ENCODE measurements at regions of chr2 and their contacts with region 1.

Region 1: DNA sequence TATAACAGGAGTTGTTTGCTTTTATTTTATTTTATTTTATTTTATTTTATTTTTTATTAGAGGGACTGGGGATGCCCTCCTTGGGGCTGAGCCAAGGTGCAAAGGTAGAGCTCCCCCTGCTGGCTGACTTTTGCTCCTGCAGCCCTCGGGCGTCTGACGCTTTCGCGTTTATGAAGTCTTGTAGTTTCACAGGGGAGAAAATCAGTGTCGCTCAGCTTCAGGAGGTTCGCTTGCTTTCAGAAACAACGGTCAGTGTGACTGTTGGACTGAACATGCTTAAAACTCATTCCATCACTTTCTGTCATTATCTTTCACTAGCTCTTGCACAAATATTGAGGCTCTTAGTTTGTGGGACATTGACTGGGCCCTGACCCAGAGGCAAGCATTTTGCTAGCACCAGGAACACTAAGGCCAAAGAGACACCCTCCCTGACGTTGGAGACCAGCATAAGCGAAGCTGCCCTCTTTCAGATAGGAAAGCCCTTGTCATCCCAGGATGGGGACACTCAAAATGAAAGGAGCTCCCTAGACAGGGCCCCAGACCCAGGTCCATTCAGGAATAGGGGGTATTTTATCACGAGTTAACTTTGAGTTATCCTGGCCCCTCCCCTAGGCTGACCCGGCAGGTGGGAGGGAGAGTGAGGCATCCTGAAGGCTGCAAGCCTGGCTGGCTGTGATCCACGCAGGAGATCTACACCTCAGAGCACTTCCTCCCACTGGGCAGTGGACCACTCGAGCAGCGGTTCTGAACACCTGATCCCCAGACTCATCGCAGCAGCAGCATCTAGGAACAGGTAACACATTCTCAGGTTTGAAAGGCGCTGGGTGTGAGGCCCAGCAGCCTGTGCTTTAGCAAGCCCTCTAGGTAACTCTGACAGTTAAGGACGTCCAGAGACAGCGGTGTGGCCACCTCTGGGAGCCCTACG is 34.4 kb downstream of the LGALSL start:
- DNase-seq: peak; percentile 86
- ATAC-seq: peak; percentile 78
- H3K4me3 Mint-ChIP-seq: no peak overlapping the region
- H3K27ac Mint-ChIP-seq: no peak overlapping the region
- H3K4me1 Mint-ChIP-seq: peaks cover 23% of the 10 kb centered on the region
- H3K27me3 Mint-ChIP-seq: peaks cover 26% of the 10 kb centered on the region

Region 2: GRCh38 chr2:64338910-64339500 is 149.3 kb before region 1 on chr2:
- CTCF ChIA-PET with region 1: interaction called, 13 read pairs
- POLR2A ChIA-PET with region 1: no interaction called
- DNase-seq: peak; percentile 48
- ATAC-seq: peak; percentile 70
- H3K4me3 Mint-ChIP-seq: no peak overlapping the region
- H3K27ac Mint-ChIP-seq: no peak overlapping the region
- H3K4me1 Mint-ChIP-seq: peaks cover 8% of the 10 kb centered on the region
- H3K27me3 Mint-ChIP-seq: peaks cover 6% of the 10 kb centered on the region

Region 3: GRCh38 chr2:64474121-64474571 is 14.2 kb before region 1 on chr2:
- CTCF ChIA-PET with region 1: interaction called, 20 read pairs
- POLR2A ChIA-PET with region 1: interaction called, 3 read pairs
- DNase-seq: no peak
- ATAC-seq: no peak
- H3K4me3 Mint-ChIP-seq: no peak overlapping the region
- H3K27ac Mint-ChIP-seq: no peak overlapping the region
- H3K4me1 Mint-ChIP-seq: peaks cover 25% of the 10 kb centered on the region
- H3K27me3 Mint-ChIP-seq: peaks cover 7% of the 10 kb centered on the region

Region 4: DNA sequence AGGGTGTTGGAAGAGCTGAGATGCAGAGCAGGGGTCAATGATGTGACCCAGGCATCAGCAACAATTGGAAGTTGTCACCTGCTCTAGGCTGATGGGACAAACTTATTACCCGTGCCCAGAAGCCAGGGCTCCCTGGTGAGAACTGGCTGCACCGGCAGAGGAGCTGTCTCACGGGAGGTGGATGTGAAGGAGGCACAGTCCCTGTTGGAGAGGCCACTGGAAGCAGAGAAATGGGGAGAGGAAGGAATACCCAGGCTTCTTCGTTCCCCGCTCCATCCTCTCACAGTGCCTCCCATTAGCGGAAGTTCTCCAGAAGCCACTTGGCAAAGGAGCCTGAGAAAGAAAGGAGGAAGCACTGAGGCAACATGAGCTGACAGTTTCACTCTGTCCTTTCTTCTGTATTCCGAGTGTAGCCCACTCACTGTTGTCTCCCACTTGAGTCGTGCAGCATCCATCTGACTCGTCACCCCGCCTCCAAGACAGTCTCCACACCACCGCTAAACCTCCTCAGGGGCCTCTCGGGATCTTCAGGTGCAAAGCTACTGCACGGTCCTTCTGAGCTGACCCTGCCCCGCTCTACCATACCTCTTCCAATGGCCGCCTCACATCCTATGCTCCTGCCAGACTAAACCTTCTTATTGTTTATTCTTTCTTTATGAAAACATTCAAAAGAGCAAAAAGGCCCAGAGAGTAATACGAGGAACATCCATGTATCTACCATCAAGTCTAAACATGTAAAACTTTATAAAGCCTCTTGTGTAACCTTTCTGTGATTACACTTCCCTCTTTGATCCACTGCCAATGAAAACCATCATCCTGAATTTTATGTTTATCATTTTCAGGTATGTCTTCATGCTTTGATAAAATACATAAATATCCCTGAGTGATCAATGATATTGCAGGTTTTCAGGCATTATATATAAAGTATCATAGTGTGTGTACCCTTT is 16.7 kb after region 1 on chr2:
- CTCF ChIA-PET with region 1: interaction called, 12 read pairs
- POLR2A ChIA-PET with region 1: no interaction called
- DNase-seq: no peak
- ATAC-seq: no peak
- H3K4me3 Mint-ChIP-seq: no peak overlapping the region
- H3K27ac Mint-ChIP-seq: no peak overlapping the region
- H3K4me1 Mint-ChIP-seq: peaks cover 4% of the 10 kb centered on the region
- H3K27me3 Mint-ChIP-seq: peaks cover 11% of the 10 kb centered on the region

Region 5: DNA sequence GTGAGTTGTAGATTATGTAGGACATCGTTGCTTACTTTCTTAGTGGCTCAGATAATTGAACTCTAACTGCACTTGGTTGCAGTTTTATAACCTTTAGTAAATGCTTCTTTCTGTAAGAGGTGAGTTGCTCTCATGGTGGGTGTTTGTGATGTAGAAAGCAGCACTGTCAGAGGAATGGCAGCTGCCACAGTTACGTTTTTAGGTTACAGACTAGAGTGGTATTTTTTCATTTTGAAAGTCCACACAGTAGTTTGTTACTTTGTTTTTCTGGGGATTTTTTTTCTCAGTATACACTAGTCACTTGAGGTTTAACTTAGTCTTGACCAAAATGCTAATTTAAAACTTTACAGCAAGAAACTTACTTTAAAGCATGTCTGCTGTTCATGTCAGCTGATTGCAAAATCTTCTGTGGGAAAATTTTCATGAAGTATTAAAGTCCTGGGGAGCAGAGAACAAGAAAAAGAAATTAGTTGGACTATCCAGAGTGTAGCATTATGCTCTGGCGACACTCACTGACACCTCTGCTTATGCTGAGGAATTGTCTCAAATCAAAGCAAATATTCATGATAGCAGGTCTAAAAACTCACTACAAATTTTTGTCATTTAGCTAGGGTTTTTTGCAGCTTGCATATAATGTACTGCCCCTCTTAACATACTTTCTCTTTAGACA is 50.6 kb after region 1 on chr2:
- CTCF ChIA-PET with region 1: no interaction called
- POLR2A ChIA-PET with region 1: no interaction called
- DNase-seq: no peak
- ATAC-seq: no peak
- H3K4me3 Mint-ChIP-seq: no peak overlapping the region
- H3K27ac Mint-ChIP-seq: no peak overlapping the region
- H3K4me1 Mint-ChIP-seq: peaks cover 25% of the 10 kb centered on the region
- H3K27me3 Mint-ChIP-seq: no peaks in the 10 kb centered on the region

Region 6: GRCh38 chr2:64737547-64737946 is 249.2 kb after region 1 on chr2:
- CTCF ChIA-PET with region 1: no interaction called
- POLR2A ChIA-PET with region 1: no interaction called
- DNase-seq: no peak
- ATAC-seq: peak; percentile 72
- H3K4me3 Mint-ChIP-seq: peak overlapping the region; percentile 24
- H3K27ac Mint-ChIP-seq: peak overlapping the region; percentile 59
- H3K4me1 Mint-ChIP-seq: peaks cover 51% of the 10 kb centered on the region
- H3K27me3 Mint-ChIP-seq: no peaks in the 10 kb centered on the region

Measured in activated CD8-positive, alpha-beta T cell treated with anti-CD3 and anti-CD28 coated beads, Interleukin-2, amount 10 ng/mL, durations not matched to agents 7 days and 5 days (primary cell).